Motor neuron (in vitro differentiated cells): ENCODE measurements at regions of chr11 and their contacts with region 1.

Region 1: GRCh38 chr11:131064373-131064991 is 148.2 kb upstream of the SNX19 start:
- ATAC-seq: peak; percentile 80 to 98 (median 92)
- H3K4me3 ChIP-seq: no peak overlapping the region
- H3K27ac ChIP-seq: no peak overlapping the region
- H3K4me1 ChIP-seq: no peaks in the 10 kb centered on the region

Region 2: DNA sequence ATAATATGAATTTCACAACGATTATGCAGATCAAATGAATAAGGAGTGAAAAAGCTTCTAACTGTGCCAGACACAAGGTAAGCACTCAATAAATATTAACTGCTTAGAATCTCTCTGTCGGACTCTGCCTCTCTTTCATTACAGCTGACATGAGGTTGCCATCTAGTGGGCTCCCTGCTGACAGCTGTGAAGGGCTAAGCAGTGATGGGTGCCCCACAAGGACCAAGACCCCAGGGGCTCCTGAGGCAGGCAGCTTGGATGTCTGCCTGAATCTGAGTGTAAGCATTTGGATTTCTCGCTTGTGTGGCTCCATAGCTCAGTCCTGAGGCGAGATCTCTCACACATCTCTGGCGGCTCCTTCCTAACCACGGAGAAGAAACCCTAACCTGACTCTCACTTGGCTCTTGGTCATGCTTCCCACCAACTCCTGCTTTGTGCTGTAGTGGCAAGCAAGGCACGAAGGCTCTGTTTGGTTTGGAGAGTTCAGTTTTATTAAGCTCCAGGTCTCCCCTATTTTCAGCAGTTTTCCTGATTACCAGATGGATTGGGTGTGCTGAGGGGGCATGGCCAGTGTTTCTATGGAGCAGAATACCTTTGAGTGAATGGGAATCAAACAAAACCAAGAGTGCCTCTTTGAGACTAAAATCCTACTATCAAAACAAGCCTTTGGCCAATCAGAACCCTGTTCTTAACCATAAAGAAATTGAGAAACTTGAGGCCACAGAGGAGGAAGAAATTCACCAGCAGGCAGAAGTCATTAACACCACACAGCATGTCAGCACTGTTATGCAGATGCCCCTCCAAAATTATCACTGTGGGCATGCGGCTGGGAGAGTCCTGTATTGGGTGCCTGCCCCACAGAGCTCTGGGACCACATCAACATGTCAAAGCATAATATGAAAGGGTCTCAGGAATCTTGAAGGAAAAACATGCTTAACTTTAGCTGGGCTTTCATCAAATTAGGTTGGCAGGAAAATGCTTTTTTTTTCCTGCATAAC is 153.1 kb after region 1 on chr11:
- in situ Hi-C with region 1: no loop called
- ATAC-seq: peak in 6 of 8 experiments; percentile 33 to 62 (median 49)
- H3K4me3 ChIP-seq: no peak overlapping the region
- H3K27ac ChIP-seq: no peak overlapping the region
- H3K4me1 ChIP-seq: peaks cover 14 to 23% of the 10 kb centered on the region in 2 donors

Region 3: DNA sequence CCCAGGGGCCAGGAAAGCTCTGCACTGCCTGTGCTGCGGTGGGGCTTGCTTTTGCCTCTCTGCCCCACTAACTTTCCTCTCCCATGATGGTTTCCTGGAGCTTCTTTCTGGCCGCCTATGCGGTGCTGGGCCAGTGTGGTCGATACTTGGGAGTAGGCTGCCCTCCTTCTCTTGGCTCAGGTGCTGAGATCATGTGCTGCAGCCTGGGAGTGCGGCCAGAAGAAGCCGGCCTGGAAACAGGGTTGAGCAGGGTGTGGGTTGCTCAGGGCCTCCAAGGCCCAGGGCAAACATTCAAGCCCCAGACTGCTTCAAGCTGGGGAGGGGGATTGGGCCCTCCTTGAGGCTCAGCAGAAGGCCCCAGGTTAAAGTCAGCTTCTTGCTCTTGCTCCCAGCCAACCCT is 430.9 kb after region 1 on chr11:
- in situ Hi-C with region 1: loop called in 3 of 9 experiments (anchors 10 to 25 kb)
- ATAC-seq: peak; percentile 19 to 80 (median 46)
- H3K4me3 ChIP-seq: no peak overlapping the region
- H3K27ac ChIP-seq: no peak overlapping the region
- H3K4me1 ChIP-seq: peaks cover 0 to 10% of the 10 kb centered on the region in 2 donors

Region 4: GRCh38 chr11:131504199-131504949 is 439.9 kb after region 1 on chr11:
- in situ Hi-C with region 1: loop called in 3 of 9 experiments (anchors 10 to 25 kb)
- ATAC-seq: peak; percentile 57 to 97 (median 82)
- H3K4me3 ChIP-seq: no peak overlapping the region
- H3K27ac ChIP-seq: no peak overlapping the region
- H3K4me1 ChIP-seq: peaks cover 20 to 27% of the 10 kb centered on the region in 2 donors

Region 5: DNA sequence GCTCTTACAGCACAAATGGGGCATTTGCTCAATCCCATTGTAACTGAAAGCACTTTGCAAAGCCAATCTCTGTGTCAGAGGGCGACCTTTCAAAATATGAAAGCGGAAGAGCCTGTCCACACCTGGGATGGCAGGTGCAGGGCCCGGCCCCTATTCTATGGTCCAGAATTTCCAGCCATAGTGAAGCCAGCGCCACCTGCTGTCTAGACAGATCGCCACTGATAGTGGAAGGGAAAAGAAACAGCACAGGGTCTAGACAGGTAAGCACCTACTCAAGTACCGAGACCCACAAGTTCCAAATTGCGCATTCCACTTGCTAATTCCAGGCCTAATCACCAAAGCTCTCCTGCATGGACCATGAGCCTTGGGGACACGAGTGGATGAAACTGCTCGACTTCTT is 447.3 kb after region 1 on chr11:
- in situ Hi-C with region 1: loop called in 2 of 9 experiments (anchors 10 to 25 kb)
- ATAC-seq: peak in 7 of 8 experiments; percentile 34 to 60 (median 46)
- H3K4me3 ChIP-seq: no peak overlapping the region
- H3K27ac ChIP-seq: no peak overlapping the region
- H3K4me1 ChIP-seq: peaks cover 13 to 25% of the 10 kb centered on the region in 2 donors

Region 6: DNA sequence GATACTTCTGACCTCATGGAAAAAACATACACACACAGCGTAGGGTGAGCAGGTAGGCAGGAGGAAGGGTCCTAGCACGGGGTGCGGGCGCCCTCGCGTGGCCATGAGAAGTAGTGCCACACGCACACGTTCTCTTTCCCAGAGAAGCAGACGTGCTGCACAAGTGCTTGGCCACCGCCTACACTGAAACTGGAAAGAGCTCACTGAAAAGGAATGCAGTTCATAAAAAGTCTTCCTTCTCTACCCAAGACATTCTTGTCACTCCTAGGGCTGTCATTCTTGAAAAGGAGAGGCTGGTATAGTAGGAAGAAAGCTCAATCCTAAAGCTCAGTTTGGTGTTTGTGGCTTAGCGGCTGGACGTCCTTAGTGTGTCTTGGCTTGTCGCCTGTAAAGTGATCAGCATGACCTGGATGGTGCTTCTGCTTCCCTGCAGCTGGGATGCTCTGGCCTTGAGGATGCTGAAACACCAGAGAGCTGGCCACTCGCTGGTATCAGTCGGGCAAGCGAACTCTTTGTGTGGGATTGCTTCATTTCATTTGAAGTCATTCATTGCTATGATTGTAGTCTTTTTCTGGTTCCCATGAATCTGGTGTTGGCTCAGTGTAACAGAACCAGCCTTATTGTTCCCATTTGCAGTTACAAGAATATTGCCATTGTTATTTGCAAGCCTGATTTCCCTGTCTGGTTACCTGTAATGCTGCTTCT is 609.7 kb after region 1 on chr11:
- in situ Hi-C with region 1: loop called in 8 of 9 experiments (anchors 10 to 25 kb)
- ATAC-seq: peak; percentile 88 to 99 (median 92)
- H3K4me3 ChIP-seq: no peak overlapping the region
- H3K27ac ChIP-seq: no peak overlapping the region
- H3K4me1 ChIP-seq: peaks cover 3 to 10% of the 10 kb centered on the region in 2 donors